ENCODE measurements at regions of chr3 and their contacts with region 1.

Region 1: DNA sequence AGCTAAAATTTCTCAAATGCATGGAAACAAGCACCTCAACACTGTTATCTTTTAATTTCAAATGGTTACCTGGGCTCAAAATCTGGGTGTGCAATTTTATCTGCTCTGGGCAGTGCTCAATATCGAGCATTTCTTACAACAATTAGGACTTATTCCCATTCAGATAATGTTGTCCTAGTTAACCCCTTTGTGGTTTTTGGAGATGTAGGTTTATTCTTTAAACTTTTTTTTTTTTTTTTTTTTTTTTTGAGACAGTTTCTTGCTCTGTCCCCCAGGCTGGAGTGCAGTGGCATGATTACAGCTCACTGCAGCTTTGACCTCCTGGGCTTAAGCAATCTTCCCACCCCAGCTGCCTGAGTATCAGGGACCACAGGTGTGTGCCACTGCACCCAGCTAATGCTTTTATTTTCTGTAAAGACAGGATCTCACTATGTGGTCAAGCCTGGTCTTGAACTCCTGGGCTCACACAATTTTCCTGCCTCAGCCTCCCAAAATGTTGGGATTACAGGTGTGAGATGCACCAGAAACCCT is 4.4 kb upstream of the ATP2C1 start:
- DNase-seq: no peak
- H3K4me3 ChIP-seq: no peak overlapping the region
- H3K27ac ChIP-seq: no peak overlapping the region
- H3K4me1 ChIP-seq: peaks cover 0 to 6% (median 0%) of the 10 kb centered on the region in 3 donors
- H3K27me3 ChIP-seq: no peaks in the 10 kb centered on the region
- CTCF ChIP-seq: no peak
- POLR2A ChIP-seq: no peak

Region 2: DNA sequence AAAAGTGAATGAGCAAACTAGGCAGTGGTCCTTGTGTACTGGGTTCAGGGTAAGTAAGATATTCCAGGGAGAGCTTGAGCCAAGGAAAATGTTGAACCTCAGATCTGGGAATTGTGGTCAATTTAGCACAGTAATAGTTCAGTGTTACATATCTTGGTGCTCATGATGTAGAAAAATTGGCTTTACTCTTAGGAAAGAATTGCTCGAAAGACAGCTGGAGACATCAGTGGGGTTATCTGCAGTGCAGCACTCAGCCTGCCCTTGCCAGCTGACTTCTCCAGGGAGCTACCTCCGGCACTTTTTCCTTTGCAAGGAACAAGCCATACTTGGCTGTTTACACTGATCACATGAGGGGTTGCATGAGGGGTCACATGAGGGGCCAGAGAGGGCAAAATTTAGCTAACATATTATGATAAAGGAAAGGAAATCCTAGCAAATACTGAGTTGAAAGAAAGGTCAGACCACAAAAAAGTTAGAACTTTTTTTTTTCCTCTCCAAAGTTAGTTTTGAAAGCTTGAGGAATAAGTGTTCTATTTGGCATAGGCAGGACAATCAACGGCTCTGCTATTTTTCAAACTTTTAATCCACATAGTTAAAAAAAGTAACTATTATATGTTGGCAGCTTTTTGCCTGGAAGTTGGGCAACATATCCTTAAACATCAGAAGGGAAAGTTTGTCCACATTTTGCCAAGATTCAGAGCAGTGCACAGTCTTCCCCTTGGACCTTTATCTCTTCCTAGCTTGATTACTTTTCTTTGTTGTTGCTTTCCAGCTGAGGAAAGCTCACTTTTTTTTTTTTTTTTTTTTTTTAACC is 280.1 kb before region 1 on chr3:
- intact Hi-C with region 1: no loop called
- DNase-seq: no peak
- H3K4me3 ChIP-seq: no peak overlapping the region
- H3K27ac ChIP-seq: no peak overlapping the region
- H3K4me1 ChIP-seq: no peaks in the 10 kb centered on the region
- H3K27me3 ChIP-seq: no peaks in the 10 kb centered on the region
- CTCF ChIP-seq: no peak
- POLR2A ChIP-seq: no peak

Region 3: GRCh38 chr3:130759699-130760338 is 129.7 kb before region 1 on chr3:
- intact Hi-C with region 1: loop called (anchors 5 kb)
- DNase-seq: no peak
- H3K4me3 ChIP-seq: no peak overlapping the region
- H3K27ac ChIP-seq: no peak overlapping the region
- H3K4me1 ChIP-seq: peaks cover 0 to 8% (median 0%) of the 10 kb centered on the region in 3 donors
- H3K27me3 ChIP-seq: peaks cover 0 to 11% (median 0%) of the 10 kb centered on the region in 4 donors
- CTCF ChIP-seq: peak in 5 of 6 experiments; percentile 62 to 83 (median 78)
- POLR2A ChIP-seq: no peak

Region 4: GRCh38 chr3:131402391-131403039 is 513.0 kb after region 1 on chr3:
- intact Hi-C with region 1: no loop called
- DNase-seq: no peak
- H3K4me3 ChIP-seq: no peak overlapping the region
- H3K27ac ChIP-seq: peak overlapping the region in 2 of 4 donors; percentile 16 to 29
- H3K4me1 ChIP-seq: peaks cover 5 to 10% (median 7%) of the 10 kb centered on the region in 3 donors
- H3K27me3 ChIP-seq: peaks cover 0 to under 1% (median 0%) of the 10 kb centered on the region in 4 donors
- CTCF ChIP-seq: no peak
- POLR2A ChIP-seq: no peak

Measured in esophagus squamous epithelium (tissue), 5 donors.